Right ventricle myocardium inferior (tissue), 1 donor: ENCODE measurements at regions of chr9 and their contacts with region 1.

Region 1: GRCh38 chr9:20930836-20931235 is 100.6 kb downstream of the HACD4 start:
- DNase-seq: no peak
- ATAC-seq: no peak

Region 2: DNA sequence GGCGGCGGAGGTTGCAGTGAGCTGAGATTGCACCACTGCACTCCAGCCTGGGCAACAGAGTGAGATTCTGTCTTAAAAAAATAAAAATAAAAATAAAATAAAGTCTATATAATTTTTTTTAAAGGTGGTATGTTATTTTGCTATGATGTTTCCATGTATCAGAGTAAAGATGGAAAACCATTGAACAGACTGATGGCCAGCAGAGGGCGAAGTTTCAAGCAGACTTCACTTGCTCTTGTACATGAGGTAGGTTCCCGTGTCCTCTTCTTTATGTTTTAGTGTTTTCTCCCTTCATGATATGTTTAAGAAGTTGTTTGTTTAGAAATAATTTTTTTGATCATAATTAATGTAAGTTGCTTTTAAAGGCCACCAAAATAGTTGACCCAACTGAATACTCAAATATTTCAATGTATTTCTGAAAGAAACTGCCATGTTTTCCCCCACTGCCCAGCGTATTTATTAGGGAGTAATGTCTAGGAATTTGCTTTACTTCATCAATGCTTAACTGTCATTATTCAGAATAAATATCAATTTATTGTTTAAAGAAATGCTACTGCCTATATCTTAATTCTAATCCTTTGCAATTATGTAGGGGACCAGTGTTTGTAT is 45.7 kb before region 1 on chr9:
- intact Hi-C with region 1: loop called (anchors 10 kb)
- DNase-seq: no peak
- ATAC-seq: no peak